ENCODE measurements at regions of chr6 and their contacts with region 1.

Region 1: DNA sequence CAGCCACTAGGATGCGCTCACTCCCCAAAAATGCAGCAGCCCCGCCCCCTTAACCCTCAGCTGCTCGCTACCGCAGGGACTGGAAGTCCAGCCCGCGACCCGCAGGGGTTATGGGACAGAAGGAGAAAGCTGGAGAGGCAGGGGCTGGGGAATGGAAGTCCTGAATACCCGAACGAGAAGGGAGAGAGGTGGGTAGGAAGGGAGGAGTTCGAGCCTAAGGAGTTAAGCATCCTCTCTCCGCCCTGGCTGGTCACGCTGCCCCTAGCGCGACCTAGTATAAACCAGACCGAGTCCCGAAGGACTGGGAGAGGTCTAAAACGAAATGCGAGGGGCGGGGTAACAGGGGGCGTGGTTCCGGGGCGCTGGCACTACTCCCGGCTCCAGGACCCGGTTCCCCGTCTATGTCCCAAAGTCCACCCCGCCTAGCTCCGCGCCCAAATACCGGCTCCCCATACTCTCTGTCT is 448 bp upstream of the DDAH2 start:
- DNase-seq: peak; percentile 94
- H3K4me3 ChIP-seq: peak overlapping the region; percentile 58
- H3K4me3 Mint-ChIP-seq: peak overlapping the region; percentile 87
- H3K27ac Mint-ChIP-seq: peak overlapping the region; percentile 84
- H3K4me1 ChIP-seq: peaks cover 13% of the 10 kb centered on the region
- H3K4me1 Mint-ChIP-seq: peaks cover 27% of the 10 kb centered on the region
- H3K27me3 ChIP-seq: no peaks in the 10 kb centered on the region
- H3K27me3 Mint-ChIP-seq: no peaks in the 10 kb centered on the region
- CTCF ChIP-seq: peak; percentile 75 to 89

Region 2: GRCh38 chr6:31426395-31427354 is 302.9 kb before region 1 on chr6:
- CTCF ChIA-PET with region 1: no interaction called
- POLR2A ChIA-PET with region 1: no interaction called
- intact Hi-C with region 1: no loop called
- DNase-seq: no peak
- H3K4me3 ChIP-seq: no peak overlapping the region
- H3K4me3 Mint-ChIP-seq: no peak overlapping the region
- H3K27ac Mint-ChIP-seq: no peak overlapping the region
- H3K4me1 ChIP-seq: no peaks in the 10 kb centered on the region
- H3K4me1 Mint-ChIP-seq: no peaks in the 10 kb centered on the region
- H3K27me3 ChIP-seq: no peaks in the 10 kb centered on the region
- H3K27me3 Mint-ChIP-seq: peaks cover 9% of the 10 kb centered on the region
- CTCF ChIP-seq: no peak

Region 3: GRCh38 chr6:31615748-31616147 is 113.8 kb before region 1 on chr6:
- CTCF ChIA-PET with region 1: no interaction called
- POLR2A ChIA-PET with region 1: no interaction called
- intact Hi-C with region 1: no loop called
- DNase-seq: no peak
- H3K4me3 ChIP-seq: no peak overlapping the region
- H3K4me3 Mint-ChIP-seq: no peak overlapping the region
- H3K27ac Mint-ChIP-seq: peak overlapping the region; percentile 91
- H3K4me1 ChIP-seq: peaks cover 29% of the 10 kb centered on the region
- H3K4me1 Mint-ChIP-seq: peaks cover 19% of the 10 kb centered on the region
- H3K27me3 ChIP-seq: no peaks in the 10 kb centered on the region
- H3K27me3 Mint-ChIP-seq: no peaks in the 10 kb centered on the region
- CTCF ChIP-seq: no peak

Region 4: DNA sequence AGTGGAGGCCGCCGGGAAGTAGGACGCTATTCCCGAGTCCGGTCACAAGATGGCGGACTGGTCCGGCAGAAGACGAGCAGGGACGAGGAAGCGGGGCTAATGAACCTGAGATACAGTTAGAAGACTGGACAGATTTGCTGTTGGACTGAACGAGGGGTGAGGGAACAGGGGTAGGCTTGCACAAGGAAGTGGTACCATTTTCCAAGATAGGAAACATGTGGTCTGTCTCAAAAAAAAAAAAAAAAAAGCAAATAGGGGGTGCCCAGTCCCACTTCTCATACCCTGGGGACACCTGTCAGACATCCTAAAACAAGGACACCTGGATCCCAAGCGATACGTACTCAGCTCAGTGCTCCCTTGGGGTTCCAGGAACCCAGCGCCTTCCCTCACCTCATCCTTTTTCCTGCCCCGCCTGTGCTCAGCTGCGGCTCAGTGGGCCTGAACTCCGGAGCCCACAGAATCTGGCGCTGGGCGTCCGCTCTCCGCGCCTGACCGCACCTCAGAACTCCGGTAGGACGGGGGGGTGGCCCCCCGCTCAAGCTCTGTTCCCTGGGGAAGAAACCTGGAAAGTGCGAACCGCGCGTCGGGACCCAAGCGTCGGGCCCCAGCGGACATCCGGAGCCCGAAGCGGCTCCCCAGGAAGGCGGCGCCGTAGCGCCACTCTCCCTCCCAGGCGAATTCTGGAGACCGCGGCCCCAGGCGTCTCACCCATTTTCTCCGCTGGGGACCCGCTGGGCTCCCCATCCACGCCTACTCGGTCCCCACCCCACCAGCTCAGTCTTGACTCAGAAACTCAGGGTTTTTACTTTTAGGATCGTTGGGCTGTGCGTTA is 48.5 kb before region 1 on chr6 and contains the start of gene LY6G5C:
- CTCF ChIA-PET with region 1: interaction called, 6 read pairs
- POLR2A ChIA-PET with region 1: interaction called, 6 read pairs
- intact Hi-C with region 1: loop called (anchors 1 kb)
- DNase-seq: peak; percentile 85 to 87
- H3K4me3 ChIP-seq: peak within 1 kb of the TSS; percentile 49
- H3K4me3 Mint-ChIP-seq: peak within 1 kb of the TSS; percentile 76
- H3K27ac Mint-ChIP-seq: peak within 1 kb of the TSS; percentile 54
- H3K4me1 ChIP-seq: peaks cover 25% of the 10 kb centered on the region
- H3K4me1 Mint-ChIP-seq: peaks cover 17% of the 10 kb centered on the region
- H3K27me3 ChIP-seq: no peaks in the 10 kb centered on the region
- H3K27me3 Mint-ChIP-seq: no peaks in the 10 kb centered on the region
- CTCF ChIP-seq: peak; percentile 66 to 81
- total RNA-seq, gene LY6G5C: 2.0 and 2.9 TPM in 2 replicates

Region 5: DNA sequence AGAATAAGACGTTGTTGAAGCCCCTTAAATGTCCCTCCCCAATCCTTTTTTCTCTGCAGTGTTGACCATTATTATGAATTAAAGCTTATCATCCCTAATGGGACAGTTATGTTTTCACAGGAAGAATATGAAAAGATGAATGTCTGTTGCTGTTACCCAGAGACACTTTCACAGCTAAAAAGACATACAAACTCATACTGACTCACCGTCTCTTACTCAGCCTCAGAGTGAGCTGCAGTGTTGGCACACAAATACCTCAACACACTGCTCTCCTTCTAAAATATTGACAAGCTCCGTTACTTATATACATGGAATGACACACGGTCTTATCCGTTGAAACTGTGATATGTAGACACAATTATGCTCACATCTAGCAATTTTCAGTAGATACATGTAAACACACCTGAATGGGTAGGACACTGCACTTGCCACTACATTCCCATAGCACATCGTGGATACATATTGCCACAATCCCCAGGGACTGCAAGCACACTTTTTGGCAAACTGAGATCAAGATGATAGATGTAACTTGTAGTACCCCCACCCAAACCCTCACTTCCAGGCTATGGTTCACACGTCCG is 23.3 kb after region 1 on chr6:
- CTCF ChIA-PET with region 1: no interaction called
- POLR2A ChIA-PET with region 1: no interaction called
- intact Hi-C with region 1: no loop called
- DNase-seq: no peak
- H3K4me3 ChIP-seq: no peak overlapping the region
- H3K4me3 Mint-ChIP-seq: no peak overlapping the region
- H3K27ac Mint-ChIP-seq: no peak overlapping the region
- H3K4me1 ChIP-seq: no peaks in the 10 kb centered on the region
- H3K4me1 Mint-ChIP-seq: no peaks in the 10 kb centered on the region
- H3K27me3 ChIP-seq: no peaks in the 10 kb centered on the region
- H3K27me3 Mint-ChIP-seq: no peaks in the 10 kb centered on the region
- CTCF ChIP-seq: no peak

Region 6: GRCh38 chr6:31763619-31763940 is 34.0 kb after region 1 on chr6:
- CTCF ChIA-PET with region 1: interaction called, 3 read pairs
- POLR2A ChIA-PET with region 1: interaction called, 3 read pairs
- intact Hi-C with region 1: loop called (anchors 1 kb)
- DNase-seq: peak; percentile 61 to 67
- H3K4me3 ChIP-seq: no peak overlapping the region
- H3K4me3 Mint-ChIP-seq: peak overlapping the region; percentile 4
- H3K27ac Mint-ChIP-seq: peak overlapping the region; percentile 29
- H3K4me1 ChIP-seq: peaks cover 9% of the 10 kb centered on the region
- H3K4me1 Mint-ChIP-seq: peaks cover 10% of the 10 kb centered on the region
- H3K27me3 ChIP-seq: no peaks in the 10 kb centered on the region
- H3K27me3 Mint-ChIP-seq: no peaks in the 10 kb centered on the region
- CTCF ChIP-seq: no peak

Region 7: DNA sequence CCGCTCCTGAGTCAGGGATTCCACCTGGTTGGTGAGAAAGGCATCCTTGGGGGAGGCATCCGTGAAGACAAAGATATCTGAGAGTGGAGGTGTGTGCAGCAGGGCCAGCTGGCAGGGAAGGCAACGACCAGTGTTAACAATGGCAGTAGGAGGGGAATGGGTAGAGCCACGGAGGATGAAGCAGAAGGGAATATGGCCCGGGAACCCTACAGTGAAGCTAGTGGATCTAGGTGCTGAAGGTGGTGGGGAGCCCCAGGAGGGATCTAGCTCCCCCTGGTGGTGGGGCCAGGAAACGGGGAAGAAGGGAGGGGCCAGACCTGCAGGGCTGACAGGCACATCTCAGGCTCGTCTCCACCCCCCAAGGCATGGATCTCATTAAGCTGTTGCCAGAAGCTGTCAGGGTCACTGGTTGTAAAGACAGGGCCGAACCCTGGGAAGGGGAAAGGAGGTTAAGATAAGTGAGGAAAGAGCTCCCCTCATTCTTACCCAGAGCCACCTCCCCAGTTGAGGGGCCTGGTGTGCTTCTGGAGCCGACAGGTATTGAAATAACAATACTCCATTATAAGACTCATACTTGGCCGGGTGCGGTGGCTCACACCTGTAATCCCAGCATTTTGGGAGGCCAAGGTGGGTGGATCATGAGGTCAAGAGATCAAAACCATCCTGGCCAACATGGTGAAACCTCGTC is 40.3 kb after region 1 on chr6:
- CTCF ChIA-PET with region 1: interaction called, 30 read pairs
- POLR2A ChIA-PET with region 1: interaction called, 8 read pairs
- intact Hi-C with region 1: loop called (anchors 1 kb)
- DNase-seq: peak; percentile 85 to 89
- H3K4me3 ChIP-seq: no peak overlapping the region
- H3K4me3 Mint-ChIP-seq: no peak overlapping the region
- H3K27ac Mint-ChIP-seq: no peak overlapping the region
- H3K4me1 ChIP-seq: peaks cover 15% of the 10 kb centered on the region
- H3K4me1 Mint-ChIP-seq: peaks cover 8% of the 10 kb centered on the region
- H3K27me3 ChIP-seq: no peaks in the 10 kb centered on the region
- H3K27me3 Mint-ChIP-seq: no peaks in the 10 kb centered on the region
- CTCF ChIP-seq: peak; percentile 85 to 87

Region 8: GRCh38 chr6:31795616-31796298 is 66.2 kb after region 1 on chr6 and contains the start of gene VARS1:
- CTCF ChIA-PET with region 1: interaction called, 3 read pairs
- POLR2A ChIA-PET with region 1: interaction called, 3 read pairs
- intact Hi-C with region 1: loop called (anchors 1 kb)
- DNase-seq: peak; percentile 92 to 95
- H3K4me3 ChIP-seq: peak within 1 kb of the TSS; percentile 80
- H3K4me3 Mint-ChIP-seq: peak within 1 kb of the TSS; percentile 98
- H3K27ac Mint-ChIP-seq: peak within 1 kb of the TSS; percentile 94
- H3K4me1 ChIP-seq: 0 out of 2 replicates have a peak, but pooled peaks cover 3% of the 10 kb centered on the region
- H3K4me1 Mint-ChIP-seq: peaks cover 15% of the 10 kb centered on the region
- H3K27me3 ChIP-seq: no peaks in the 10 kb centered on the region
- H3K27me3 Mint-ChIP-seq: no peaks in the 10 kb centered on the region
- CTCF ChIP-seq: peak; percentile 78 to 94
- total RNA-seq, gene VARS1: 132 and 135 TPM in 2 replicates

Measured in Caco-2 (cell line).